GM13976 (cell line): ENCODE measurements at regions of chr2 and their contacts with region 1.

Region 1: DNA sequence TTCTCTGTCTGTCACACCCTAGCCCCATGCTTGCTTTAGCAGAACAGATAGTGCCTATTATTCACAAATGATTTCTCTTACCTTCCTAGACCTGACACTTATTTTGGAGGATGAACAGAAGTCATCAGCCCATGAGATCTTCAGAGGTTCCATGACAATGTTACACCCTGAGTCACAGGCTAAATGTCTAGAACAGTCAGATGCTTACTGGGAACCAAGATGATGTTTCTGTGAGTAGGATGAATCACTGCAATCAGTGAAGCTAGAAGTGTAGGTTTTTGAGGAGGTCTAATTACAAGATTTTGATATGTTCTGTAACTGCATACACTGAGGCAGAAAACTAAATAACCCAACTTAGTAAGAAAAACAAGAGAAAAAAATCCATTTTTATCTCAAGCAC is 123.0 kb upstream of the THUMPD2 start:
- DNase-seq: no peak
- CTCF ChIP-seq: no peak

Region 2: DNA sequence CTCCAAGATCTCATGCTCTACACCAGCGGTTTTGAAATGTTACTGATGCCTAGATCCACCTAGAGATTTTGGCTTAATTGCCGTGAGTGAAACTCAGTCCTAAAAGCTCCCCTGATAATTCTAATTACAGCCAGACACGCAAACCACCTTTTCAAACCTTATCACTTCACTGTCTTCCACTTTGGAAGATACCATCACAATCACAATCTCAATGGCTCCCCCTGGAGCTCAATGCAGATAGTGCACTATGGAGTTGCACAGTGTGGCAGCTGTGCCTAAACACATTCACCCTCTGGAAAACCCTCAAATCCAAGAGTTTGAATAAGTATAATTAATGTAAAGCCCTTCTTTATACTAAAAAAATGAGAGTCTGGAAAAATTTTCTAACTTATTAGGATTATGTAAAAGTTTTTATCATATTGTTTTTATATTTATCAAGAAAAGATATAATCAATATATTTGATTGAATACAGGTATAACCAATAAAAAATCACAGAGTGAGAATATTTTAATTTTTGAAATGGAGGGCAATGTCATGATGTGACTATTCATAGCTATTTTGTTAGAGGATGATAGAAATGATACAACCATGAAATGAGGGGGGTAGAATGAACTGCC is 652.7 kb after region 1 on chr2:
- in situ Hi-C with region 1: loop called (anchors 10 kb)
- DNase-seq: peak; percentile 16
- CTCF ChIP-seq: peak; percentile 83